ENCODE measurements at regions of chr1 and their contacts with region 1.

Region 1: GRCh38 chr1:18234790-18235242 is 127.2 kb downstream of the IGSF21 start:
- DNase-seq: peak; percentile 45
- ATAC-seq: peak; percentile 49
- H3K4me3 Mint-ChIP-seq: no peak overlapping the region
- H3K27ac Mint-ChIP-seq: no peak overlapping the region
- H3K4me1 Mint-ChIP-seq: no peaks in the 10 kb centered on the region
- H3K27me3 Mint-ChIP-seq: peaks cover 12% of the 10 kb centered on the region
- CTCF ChIP-seq: peak; percentile 63

Region 2: GRCh38 chr1:18246543-18246942 is 11.7 kb after region 1 on chr1:
- CTCF ChIA-PET with region 1: interaction called, 12 read pairs
- POLR2A ChIA-PET with region 1: interaction called, 3 read pairs
- intact Hi-C with region 1: no loop called
- DNase-seq: no peak
- ATAC-seq: no peak
- H3K4me3 Mint-ChIP-seq: no peak overlapping the region
- H3K27ac Mint-ChIP-seq: no peak overlapping the region
- H3K4me1 Mint-ChIP-seq: no peaks in the 10 kb centered on the region
- H3K27me3 Mint-ChIP-seq: peaks cover 2% of the 10 kb centered on the region
- CTCF ChIP-seq: no peak

Measured in activated CD8-positive, alpha-beta T cell treated with anti-CD3 and anti-CD28 coated beads for 36 hours (primary cell).